ENCODE measurements at regions of chr11 and their contacts with region 1.

Region 1: DNA sequence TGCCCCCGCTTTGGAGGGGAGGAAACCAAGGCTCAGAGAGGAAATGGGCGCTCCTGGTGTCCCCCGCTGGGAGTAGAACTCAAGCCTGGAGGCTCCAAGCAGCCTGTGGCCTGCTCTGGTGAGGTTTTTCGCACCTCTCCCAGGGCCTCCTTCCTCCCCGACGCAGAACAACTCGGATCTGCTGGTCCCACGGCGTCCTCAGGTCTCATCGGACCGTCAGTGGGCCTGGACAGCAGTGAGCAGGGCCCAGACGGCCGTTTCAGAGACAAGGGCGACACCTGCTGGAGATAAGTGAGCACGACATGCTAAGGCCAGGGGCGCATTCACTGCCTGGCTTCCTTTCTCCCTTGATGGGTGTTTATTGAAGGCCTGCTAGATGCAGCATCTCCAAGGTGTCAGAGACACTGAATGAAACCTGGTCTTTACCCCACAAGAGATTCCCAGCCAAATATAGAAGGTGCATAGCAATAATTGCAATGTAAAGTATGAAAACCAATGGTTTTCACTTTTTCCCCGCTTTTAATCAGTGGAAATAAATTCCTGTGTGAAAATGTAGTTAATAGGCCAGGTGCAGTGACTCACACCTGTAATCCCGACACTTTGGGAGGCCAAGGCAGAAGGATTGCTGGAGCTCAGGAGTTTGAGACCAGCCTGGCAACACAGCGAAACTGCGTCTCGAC is 26.9 kb upstream of the CD82 start:
- DNase-seq: peak; percentile 43 to 75
- H3K4me3 ChIP-seq: no peak overlapping the region
- H3K27ac ChIP-seq: no peak overlapping the region
- H3K4me1 ChIP-seq: no peaks in the 10 kb centered on the region
- H3K27me3 ChIP-seq: peaks cover 8% of the 10 kb centered on the region
- CTCF ChIP-seq: peak; percentile 99

Region 2: GRCh38 chr11:43289368-43289767 is 1249.1 kb before region 1 on chr11:
- CTCF ChIA-PET with region 1: interaction called, 16 read pairs
- POLR2A ChIA-PET with region 1: no interaction called
- intact Hi-C with region 1: no loop called
- DNase-seq: no peak
- H3K4me3 ChIP-seq: no peak overlapping the region
- H3K27ac ChIP-seq: no peak overlapping the region
- H3K4me1 ChIP-seq: no peaks in the 10 kb centered on the region
- H3K27me3 ChIP-seq: peaks cover 10% of the 10 kb centered on the region
- CTCF ChIP-seq: no peak

Region 3: DNA sequence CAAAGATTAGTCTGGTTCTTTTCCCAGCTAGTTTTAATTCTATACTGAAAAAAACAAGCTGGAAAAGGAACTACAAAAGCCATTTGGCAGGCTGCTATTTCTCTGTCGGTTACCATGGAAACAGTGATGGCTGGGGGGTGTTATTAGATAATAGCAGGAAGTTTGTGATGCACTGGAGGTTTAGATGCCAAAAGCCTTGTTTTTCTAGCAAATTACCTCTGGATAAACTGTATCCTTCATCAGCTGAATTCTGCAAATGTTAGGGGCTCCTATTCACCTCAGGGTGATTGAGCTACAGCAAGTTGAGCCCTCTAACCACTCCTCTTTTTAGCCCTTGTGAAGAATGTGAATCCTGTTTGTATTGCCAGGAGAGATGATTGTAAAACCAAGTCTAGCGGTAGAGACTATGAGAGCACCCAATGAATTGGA is 632.7 kb before region 1 on chr11:
- CTCF ChIA-PET with region 1: no interaction called
- POLR2A ChIA-PET with region 1: no interaction called
- intact Hi-C with region 1: loop called (anchors 10 kb)
- DNase-seq: no peak
- H3K4me3 ChIP-seq: no peak overlapping the region
- H3K27ac ChIP-seq: no peak overlapping the region
- H3K4me1 ChIP-seq: no peaks in the 10 kb centered on the region
- H3K27me3 ChIP-seq: no peaks in the 10 kb centered on the region
- CTCF ChIP-seq: no peak

Region 4: GRCh38 chr11:44095506-44096394 is 442.8 kb before region 1 on chr11 and contains the start of gene EXT2:
- CTCF ChIA-PET with region 1: no interaction called
- POLR2A ChIA-PET with region 1: no interaction called
- intact Hi-C with region 1: loop called (anchors 1 kb)
- DNase-seq: peak; percentile 60 to 88
- H3K4me3 ChIP-seq: peak within 1 kb of the TSS; percentile 82
- H3K27ac ChIP-seq: peak within 1 kb of the TSS; percentile 41
- H3K4me1 ChIP-seq: peaks cover 16% of the 10 kb centered on the region
- H3K27me3 ChIP-seq: no peaks in the 10 kb centered on the region
- CTCF ChIP-seq: peak; percentile 87
- total RNA-seq, gene EXT2: 72.4 and 74.8 TPM in 2 replicates

Region 5: GRCh38 chr11:44110231-44110679 is 428.3 kb before region 1 on chr11:
- CTCF ChIA-PET with region 1: no interaction called
- POLR2A ChIA-PET with region 1: interaction called, 5 read pairs
- intact Hi-C with region 1: loop called (anchors 5 kb)
- DNase-seq: peak in 1 of 2 experiments; percentile 39
- H3K4me3 ChIP-seq: no peak overlapping the region
- H3K27ac ChIP-seq: no peak overlapping the region
- H3K4me1 ChIP-seq: no peaks in the 10 kb centered on the region
- H3K27me3 ChIP-seq: no peaks in the 10 kb centered on the region
- CTCF ChIP-seq: peak; percentile 86

Region 6: DNA sequence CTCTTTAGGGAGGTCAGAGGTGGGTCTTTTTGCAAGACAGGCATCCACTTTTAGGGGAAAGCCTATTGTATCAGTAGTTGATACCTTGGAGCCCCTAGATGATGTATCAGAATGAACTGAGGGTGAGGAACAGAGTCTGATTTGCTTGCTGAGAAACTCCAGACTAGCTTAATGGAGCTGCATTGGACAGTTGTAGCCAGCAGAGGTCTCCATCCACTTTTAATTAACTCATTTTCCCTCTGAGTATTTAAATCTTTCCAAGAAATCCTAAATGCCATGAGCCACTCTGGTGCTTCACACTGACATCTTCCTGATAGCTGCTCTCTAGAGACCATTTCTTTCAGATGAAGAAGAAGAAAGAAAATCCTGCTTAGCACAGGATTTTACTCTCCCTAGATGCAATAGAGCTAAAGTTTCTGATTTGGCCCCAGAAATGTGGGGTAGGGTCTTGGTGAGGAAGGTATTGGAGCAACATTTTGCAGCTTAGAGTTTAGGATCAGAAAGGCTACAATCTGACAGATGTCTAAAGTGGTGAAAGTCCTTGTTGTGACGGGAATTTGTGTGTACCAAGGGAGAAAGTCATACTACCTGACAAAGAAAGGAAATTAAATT is 405.1 kb before region 1 on chr11:
- CTCF ChIA-PET with region 1: no interaction called
- POLR2A ChIA-PET with region 1: no interaction called
- intact Hi-C with region 1: loop called (anchors 1 kb)
- DNase-seq: peak in 1 of 2 experiments; percentile 41
- H3K4me3 ChIP-seq: no peak overlapping the region
- H3K27ac ChIP-seq: no peak overlapping the region
- H3K4me1 ChIP-seq: no peaks in the 10 kb centered on the region
- H3K27me3 ChIP-seq: no peaks in the 10 kb centered on the region
- CTCF ChIP-seq: peak; percentile 89

Region 7: GRCh38 chr11:44464741-44465140 is 73.8 kb before region 1 on chr11:
- CTCF ChIA-PET with region 1: no interaction called
- POLR2A ChIA-PET with region 1: no interaction called
- intact Hi-C with region 1: no loop called
- DNase-seq: no peak
- H3K4me3 ChIP-seq: no peak overlapping the region
- H3K27ac ChIP-seq: no peak overlapping the region
- H3K4me1 ChIP-seq: no peaks in the 10 kb centered on the region
- H3K27me3 ChIP-seq: peaks cover 34% of the 10 kb centered on the region
- CTCF ChIP-seq: peak; percentile 46

Region 8: DNA sequence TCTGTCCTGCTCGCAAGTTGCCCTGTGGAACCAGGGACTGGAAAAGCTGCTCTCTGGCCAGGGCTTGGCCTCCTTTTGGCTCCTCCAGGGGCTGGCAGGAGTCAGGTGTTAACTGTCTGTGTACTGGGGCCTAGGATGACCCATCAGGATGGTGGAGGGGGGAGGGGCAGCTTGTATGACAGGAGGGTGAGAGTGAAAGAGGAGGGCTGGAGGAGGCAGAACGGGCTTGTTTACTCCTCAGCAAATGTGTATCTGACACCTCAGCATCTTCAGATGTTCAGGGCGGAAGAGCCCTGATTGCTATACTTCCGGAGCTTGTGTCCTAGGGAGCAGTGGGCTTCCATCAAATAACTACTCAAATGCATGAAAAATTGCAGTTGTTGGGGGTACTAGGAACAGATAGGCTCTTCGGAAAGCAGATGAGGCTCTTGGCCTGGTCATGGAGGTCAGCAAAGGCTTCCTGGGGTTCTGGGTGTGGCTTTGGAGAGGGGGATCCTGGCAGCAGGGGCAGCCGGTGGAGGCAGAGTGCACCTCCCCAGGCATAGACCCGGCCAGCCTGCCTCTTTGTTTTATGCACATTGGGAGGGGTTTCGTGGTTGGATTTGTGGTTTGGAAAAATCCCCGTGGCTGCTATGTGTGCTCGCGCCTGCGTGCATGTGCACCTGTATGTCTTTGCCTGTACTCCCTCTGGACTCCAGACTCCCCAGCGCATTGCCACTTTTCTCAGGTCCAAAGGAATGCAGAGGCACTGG is 58.2 kb after region 1 on chr11:
- CTCF ChIA-PET with region 1: no interaction called
- POLR2A ChIA-PET with region 1: no interaction called
- intact Hi-C with region 1: no loop called
- DNase-seq: no peak
- H3K4me3 ChIP-seq: no peak overlapping the region
- H3K27ac ChIP-seq: no peak overlapping the region
- H3K4me1 ChIP-seq: no peaks in the 10 kb centered on the region
- H3K27me3 ChIP-seq: no peaks in the 10 kb centered on the region
- CTCF ChIP-seq: no peak

Measured in PC-9 (cell line).